GM10248 (cell line): ENCODE measurements at regions of chr1 and their contacts with region 1.

Region 1: DNA sequence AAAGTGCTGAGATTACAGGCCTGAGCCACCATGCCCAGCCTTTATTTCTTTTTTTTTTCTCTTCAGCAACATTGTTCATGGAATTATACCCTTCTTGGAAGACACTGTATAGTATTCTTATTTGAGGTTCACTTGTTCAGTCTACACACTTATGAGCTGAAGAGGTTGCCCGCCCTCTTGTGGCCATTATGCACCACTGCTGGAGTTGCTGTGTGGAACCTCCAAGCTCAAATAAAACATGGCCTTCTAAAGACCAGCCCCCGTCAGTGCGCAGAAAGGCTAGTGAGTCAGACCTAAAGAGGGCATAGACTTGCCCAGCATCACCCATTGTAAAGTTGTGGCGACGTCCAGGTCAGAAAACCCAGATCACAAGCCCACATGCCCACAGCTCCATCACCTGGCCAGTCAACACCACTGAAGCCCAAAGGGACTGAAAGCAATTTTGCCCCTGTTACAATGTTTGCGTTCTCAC is 20.4 kb downstream of the LURAP1 start:
- DNase-seq: peak; percentile 76
- CTCF ChIP-seq: peak; percentile 93

Region 2: GRCh38 chr1:45957684-45958083 is 265.8 kb before region 1 on chr1:
- CTCF ChIA-PET with region 1: no interaction called
- POLR2A ChIA-PET with region 1: no interaction called
- DNase-seq: no peak
- CTCF ChIP-seq: no peak

Region 3: GRCh38 chr1:46043458-46044017 is 180.0 kb before region 1 on chr1:
- CTCF ChIA-PET with region 1: interaction called, 110 read pairs
- POLR2A ChIA-PET with region 1: no interaction called
- DNase-seq: peak; percentile 63
- CTCF ChIP-seq: no peak

Region 4: DNA sequence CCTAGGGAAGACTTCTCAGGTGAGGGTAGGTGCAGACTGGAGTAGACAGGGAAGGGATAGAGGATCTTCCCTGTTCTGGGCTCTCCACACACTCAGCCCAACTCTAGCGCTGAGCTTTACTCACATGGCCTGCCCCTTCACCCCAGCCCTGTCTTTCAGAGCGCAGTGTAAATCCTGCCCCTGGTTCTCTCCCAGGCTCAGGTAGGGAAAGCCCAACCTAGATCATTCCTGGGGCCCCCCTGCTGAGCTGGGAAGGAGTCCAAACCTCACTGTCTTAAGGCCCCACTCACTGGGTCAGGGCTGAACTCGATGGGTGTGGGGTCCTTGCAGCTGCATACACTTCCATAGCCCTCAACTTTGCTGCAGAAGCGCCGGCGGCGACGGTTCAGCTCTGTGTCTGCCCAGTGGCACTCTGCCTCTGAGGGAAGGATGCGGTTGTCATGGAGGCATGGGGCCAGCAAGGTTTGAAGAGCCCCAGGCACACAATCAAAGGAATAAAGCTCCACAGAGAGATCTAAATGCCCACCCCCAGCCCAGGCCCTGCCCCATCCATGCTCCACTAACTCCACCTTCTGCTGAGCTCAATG is 29.4 kb before region 1 on chr1:
- CTCF ChIA-PET with region 1: interaction called, 12 read pairs
- POLR2A ChIA-PET with region 1: no interaction called
- DNase-seq: no peak
- CTCF ChIP-seq: no peak

Region 5: GRCh38 chr1:46211051-46211450 is 12.5 kb before region 1 on chr1:
- CTCF ChIA-PET with region 1: interaction called, 30 read pairs
- POLR2A ChIA-PET with region 1: no interaction called
- DNase-seq: no peak
- CTCF ChIP-seq: no peak

Region 6: DNA sequence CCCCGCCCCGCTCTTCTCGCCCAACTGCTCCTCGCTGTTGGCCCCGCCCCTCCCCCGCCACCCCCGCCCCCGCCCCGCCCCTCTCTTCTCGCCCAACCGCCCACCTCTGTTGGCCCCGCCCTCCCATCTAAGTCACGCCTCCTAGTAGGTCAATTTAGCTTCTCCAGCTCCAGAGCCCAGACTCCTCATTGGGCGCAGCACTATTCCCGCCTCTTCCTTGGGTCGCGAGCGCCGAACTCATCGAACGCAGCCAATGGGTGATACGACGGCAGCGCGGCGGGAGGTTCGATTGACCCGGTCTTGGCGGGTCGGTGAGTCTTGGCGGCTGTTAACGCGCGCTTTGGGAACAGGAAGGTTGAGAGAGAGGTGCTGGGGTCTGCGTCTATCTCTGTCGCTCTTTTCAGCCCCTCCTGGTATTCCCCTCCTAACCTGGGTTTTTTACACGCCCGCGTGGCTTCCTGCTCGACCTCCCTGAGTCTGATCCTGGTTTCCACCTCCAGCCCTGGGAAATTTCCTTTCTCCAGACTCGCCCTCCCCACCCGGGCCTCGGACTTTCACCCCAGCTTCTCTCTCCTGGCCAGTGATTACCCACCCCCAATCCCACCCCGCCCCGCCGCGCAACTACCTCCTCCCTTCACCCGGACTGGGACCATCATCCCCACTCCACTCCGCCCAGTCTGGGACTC is 24.1 kb after region 1 on chr1 and contains the start of gene RAD54L:
- CTCF ChIA-PET with region 1: interaction called, 44 read pairs
- POLR2A ChIA-PET with region 1: interaction called, 5 read pairs
- DNase-seq: peak; percentile 99
- CTCF ChIP-seq: no peak